PC-9 (cell line): ENCODE measurements at regions of chr6 and their contacts with region 1.

Region 1: DNA sequence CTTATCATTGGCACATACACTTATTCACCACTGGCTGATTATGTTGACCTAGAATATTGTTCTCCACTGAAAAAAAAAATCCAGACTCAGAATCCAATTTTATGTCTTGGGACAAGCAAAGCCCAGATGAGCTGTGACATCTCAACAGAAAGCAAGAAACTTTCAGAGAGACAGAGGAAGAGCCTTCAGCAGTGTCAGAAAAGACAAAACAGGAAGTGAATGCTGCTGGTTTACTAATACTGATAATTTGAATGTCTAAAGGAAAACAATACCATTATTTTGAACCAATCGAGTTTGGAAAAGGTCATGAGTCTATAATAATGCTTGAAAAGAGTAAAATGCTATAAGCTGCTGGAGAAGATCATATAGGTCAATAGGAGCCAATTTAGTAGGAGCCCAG is 179.8 kb upstream of the RIMS1 start:
- DNase-seq: no peak
- H3K4me3 ChIP-seq: no peak overlapping the region
- H3K27ac ChIP-seq: no peak overlapping the region
- H3K4me1 ChIP-seq: no peaks in the 10 kb centered on the region
- H3K27me3 ChIP-seq: no peaks in the 10 kb centered on the region
- CTCF ChIP-seq: no peak

Region 2: GRCh38 chr6:71649915-71650314 is 56.6 kb before region 1 on chr6:
- CTCF ChIA-PET with region 1: interaction called, 12 read pairs
- POLR2A ChIA-PET with region 1: no interaction called
- intact Hi-C with region 1: no loop called
- DNase-seq: no peak
- H3K4me3 ChIP-seq: no peak overlapping the region
- H3K27ac ChIP-seq: no peak overlapping the region
- H3K4me1 ChIP-seq: no peaks in the 10 kb centered on the region
- H3K27me3 ChIP-seq: no peaks in the 10 kb centered on the region
- CTCF ChIP-seq: no peak